Activated B cell treated with CpG ODN at 0.5 μM for 24 hours (primary cell): ENCODE measurements at regions of chr3 and their contacts with region 1.

Region 1: DNA sequence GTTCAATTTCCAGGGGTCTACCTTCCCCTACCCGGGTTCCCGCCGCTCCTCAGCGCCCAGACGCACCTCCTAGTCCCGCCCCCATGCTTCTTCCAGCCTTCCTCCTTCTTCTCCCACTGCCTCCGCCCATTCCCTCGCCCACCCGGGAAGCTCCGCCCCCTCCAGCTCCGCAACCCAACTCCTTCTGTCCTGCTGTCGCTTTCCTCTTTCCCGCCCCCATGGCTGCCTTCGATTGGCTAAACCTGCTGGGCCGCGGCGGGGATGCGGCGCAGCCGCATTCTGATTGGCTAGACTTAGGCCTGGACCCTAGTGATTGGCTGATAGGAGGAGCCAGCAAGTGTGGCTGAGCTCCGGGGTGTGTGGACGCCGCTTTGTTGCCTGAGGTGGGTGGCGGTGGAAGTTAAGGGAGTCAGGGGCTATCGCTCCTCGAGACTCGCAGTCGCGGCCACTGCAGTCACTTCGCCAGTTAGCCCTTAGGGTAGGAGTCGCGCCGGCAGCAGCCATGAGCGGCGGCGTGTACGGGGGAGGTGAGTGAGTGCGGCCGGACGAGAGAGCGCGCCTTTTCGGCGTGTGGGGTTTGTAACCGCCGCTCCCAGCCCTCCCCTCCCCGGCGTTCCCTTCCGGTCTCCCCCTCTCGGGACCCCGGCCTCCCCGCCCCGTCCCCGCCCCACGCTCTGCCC is at the start of gene ACTL6A:
- DNase-seq: peak; percentile 94
- ATAC-seq: peak; percentile 92
- H3K4me3 Mint-ChIP-seq: peak within 1 kb of the TSS; percentile 99
- H3K27ac Mint-ChIP-seq: peak within 1 kb of the TSS; percentile 97
- H3K4me1 Mint-ChIP-seq: peaks cover 24% of the 10 kb centered on the region
- H3K27me3 Mint-ChIP-seq: no peaks in the 10 kb centered on the region
- CTCF ChIP-seq: no peak
- total RNA-seq, gene ACTL6A: 55.0 and 58.2 TPM in 2 replicates

Region 2: DNA sequence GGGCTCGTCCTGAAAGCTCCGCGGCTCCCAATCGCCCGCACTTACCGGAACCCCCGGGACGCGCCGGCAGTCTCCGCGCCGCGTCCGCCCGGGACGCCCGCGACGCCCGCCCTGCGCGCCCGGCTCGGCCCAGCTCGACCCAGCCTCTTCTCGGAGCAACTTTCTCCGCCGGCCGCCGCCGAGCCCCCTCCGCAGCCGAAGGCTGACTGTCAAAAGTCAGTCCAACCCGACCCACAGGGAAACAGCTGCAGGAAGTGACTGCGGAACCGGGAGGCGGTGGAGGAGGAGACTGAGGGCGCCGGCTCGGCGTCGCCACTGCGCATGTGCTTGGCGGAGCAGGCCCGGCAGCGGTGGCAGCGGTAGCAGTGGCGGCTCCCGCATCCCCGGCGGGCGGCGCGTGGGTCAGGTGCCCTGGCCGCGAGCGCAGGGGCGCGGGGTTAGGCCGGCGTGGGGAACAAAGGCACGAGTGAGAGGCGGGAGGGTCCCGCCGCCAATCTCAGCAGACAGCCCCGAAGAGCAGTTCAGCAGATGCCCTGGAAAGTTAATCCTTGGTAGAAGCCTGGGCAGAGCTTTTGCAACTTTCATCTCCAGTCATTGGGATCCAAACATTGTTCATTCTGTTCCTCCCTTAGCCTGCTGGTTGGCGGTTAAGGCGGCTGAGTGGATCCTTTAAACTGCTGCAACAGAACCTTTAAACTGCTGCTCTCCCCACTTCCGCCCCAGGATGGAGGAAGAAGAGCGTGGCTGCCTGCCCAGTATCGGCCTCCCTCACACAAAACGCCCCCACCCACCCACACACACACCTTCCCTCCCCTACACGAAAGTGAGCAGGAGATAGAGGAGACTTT is 491.0 kb before region 1 on chr3 and contains the start of gene ZMAT3:
- CTCF ChIA-PET with region 1: no interaction called
- POLR2A ChIA-PET with region 1: interaction called, 6 read pairs
- intact Hi-C with region 1: loop called (anchors 2 kb)
- DNase-seq: peak; percentile 82
- ATAC-seq: peak; percentile 74
- H3K4me3 Mint-ChIP-seq: peak within 1 kb of the TSS; percentile 96
- H3K27ac Mint-ChIP-seq: peak within 1 kb of the TSS; percentile 91
- H3K4me1 Mint-ChIP-seq: peaks cover 60% of the 10 kb centered on the region
- H3K27me3 Mint-ChIP-seq: no peaks in the 10 kb centered on the region
- CTCF ChIP-seq: no peak
- total RNA-seq, gene ZMAT3: 29.8 and 32.0 TPM in 2 replicates

Region 3: GRCh38 chr3:179322286-179323196 is 240.2 kb before region 1 on chr3 and contains the start of gene ZNF639:
- CTCF ChIA-PET with region 1: interaction called, 6 read pairs
- POLR2A ChIA-PET with region 1: interaction called, 7 read pairs
- intact Hi-C with region 1: loop called (anchors 1 kb)
- DNase-seq: peak; percentile 89
- ATAC-seq: peak; percentile 88
- H3K4me3 Mint-ChIP-seq: peak within 1 kb of the TSS; percentile 87
- H3K27ac Mint-ChIP-seq: peak within 1 kb of the TSS; percentile 89
- H3K4me1 Mint-ChIP-seq: peaks cover 36% of the 10 kb centered on the region
- H3K27me3 Mint-ChIP-seq: no peaks in the 10 kb centered on the region
- CTCF ChIP-seq: peak; percentile 57
- total RNA-seq, gene ZNF639: 37.1 and 41.4 TPM in 2 replicates

Region 4: DNA sequence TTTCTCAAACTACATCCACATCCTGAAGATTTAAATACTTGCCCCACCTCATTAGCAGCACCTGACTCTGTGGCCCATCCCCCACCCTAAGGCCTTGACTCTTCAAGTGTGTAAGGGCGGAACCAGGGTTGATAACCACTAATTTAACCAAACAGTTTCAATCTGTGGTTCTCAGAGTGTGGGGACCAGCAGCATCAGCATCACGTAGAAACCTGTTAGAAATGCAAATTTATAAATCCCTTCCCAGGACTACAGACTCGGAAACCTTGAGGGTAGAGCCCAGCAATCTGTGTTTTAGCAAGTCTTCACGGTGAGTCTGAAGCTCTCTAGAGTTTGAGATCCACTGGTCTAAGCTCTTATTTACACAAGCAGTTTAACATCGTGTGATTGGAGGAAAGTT is 123.9 kb before region 1 on chr3:
- CTCF ChIA-PET with region 1: interaction called, 3 read pairs
- POLR2A ChIA-PET with region 1: no interaction called
- intact Hi-C with region 1: loop called (anchors 2 kb)
- DNase-seq: peak; percentile 41
- ATAC-seq: peak; percentile 96
- H3K4me3 Mint-ChIP-seq: peak overlapping the region; percentile 71
- H3K27ac Mint-ChIP-seq: peak overlapping the region; percentile 92
- H3K4me1 Mint-ChIP-seq: peaks cover 51% of the 10 kb centered on the region
- H3K27me3 Mint-ChIP-seq: no peaks in the 10 kb centered on the region
- CTCF ChIP-seq: no peak

Region 5: DNA sequence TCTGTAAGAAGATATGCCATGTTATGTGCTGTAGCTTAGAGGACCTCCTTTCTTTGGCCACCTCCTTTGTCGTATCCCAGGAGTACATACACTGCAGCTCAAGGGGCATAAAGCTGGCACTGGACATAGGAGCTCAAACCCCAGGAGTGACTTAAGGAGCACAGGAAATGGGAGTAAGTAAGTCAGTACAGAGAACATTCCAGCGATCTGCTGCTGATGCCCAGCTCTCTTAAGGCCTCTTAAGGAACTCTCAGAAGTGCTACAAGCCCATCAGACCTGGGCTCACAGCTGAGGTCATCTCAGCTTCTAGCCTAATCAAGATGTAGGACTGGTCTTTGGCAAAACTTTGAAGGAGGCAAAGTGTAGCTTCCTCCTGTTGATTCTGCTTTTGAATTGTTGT is 21.6 kb before region 1 on chr3:
- CTCF ChIA-PET with region 1: no interaction called
- POLR2A ChIA-PET with region 1: no interaction called
- intact Hi-C with region 1: no loop called
- DNase-seq: no peak
- ATAC-seq: no peak
- H3K4me3 Mint-ChIP-seq: no peak overlapping the region
- H3K27ac Mint-ChIP-seq: no peak overlapping the region
- H3K4me1 Mint-ChIP-seq: no peaks in the 10 kb centered on the region
- H3K27me3 Mint-ChIP-seq: no peaks in the 10 kb centered on the region
- CTCF ChIP-seq: no peak

Region 6: GRCh38 chr3:179653096-179653797 is 90.5 kb after region 1 on chr3:
- CTCF ChIA-PET with region 1: no interaction called
- POLR2A ChIA-PET with region 1: no interaction called
- intact Hi-C with region 1: loop called (anchors 1 kb)
- DNase-seq: peak; percentile 66
- ATAC-seq: peak; percentile 38
- H3K4me3 Mint-ChIP-seq: peak overlapping the region; percentile 91
- H3K27ac Mint-ChIP-seq: peak overlapping the region; percentile 87
- H3K4me1 Mint-ChIP-seq: peaks cover 25% of the 10 kb centered on the region
- H3K27me3 Mint-ChIP-seq: no peaks in the 10 kb centered on the region
- CTCF ChIP-seq: no peak